Sigmoid colon (tissue), 7 donors: ENCODE measurements at regions of chr20 and their contacts with region 1.

Region 1: DNA sequence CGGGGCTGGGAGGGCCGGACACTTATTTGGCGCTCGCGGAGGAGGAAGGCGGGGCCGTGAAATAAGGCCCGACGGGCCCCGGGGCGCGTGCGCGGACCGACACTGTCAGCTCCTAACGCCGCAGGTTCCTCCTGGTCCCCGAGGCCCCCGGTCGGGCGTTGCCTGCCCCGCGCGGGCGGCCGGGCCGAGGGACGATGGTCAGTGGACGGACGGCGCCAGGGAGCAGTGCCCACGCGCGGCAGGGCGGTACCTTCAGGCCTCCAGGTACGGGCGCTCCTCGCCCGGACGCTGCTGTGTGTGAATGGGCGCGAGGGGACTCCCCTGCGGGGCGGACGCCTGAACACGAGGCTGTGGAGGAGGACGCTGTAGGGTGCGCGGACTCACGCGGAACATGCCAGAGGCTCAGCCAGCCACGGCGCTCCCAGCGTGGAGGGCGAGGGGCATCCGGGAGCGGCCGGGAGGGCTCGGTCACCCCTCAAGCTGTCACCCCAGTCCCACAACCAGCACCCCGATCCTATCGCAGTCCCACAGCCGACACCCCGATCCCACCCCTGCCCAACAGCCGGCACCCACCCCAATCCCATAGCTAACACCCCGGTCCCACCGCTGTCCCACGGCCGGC is 339 bp upstream of the GMEB2 start:
- DNase-seq: peak; percentile 98
- H3K4me3 ChIP-seq: peak overlapping the region; percentile 79 to 98 (median 90)
- H3K27ac ChIP-seq: peak overlapping the region; percentile 95 to 99 (median 96)
- H3K4me1 ChIP-seq: peaks cover 0 to 37% (median 21%) of the 10 kb centered on the region in 4 donors
- H3K27me3 ChIP-seq: no peaks in the 10 kb centered on the region
- CTCF ChIP-seq: no peak
- EP300 ChIP-seq: peak in 1 of 4 donors; percentile 5
- POLR2A ChIP-seq: peak; percentile 36 to 56

Region 2: DNA sequence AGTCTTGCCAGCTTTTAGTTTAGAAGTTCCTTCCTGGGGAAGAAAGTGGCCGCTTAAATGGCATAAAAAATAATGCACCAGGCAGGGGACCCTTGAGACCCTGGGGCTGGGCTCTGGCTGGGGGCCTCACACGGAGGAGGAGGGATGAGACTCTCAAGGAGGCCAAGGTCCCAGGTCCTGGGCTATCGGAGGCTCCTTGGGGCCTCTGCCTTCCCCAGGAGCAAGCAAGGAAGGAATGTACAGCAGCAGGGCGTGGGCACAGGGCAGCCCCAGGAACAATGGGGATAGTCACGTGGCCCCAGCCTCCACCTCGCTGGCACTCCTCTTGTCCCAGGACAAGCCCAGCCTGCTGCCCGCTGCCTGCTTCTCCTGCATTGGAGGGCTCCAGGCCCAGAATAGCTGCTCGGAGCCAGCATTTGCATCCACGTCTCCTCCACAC is 531.1 kb before region 1 on chr20:
- intact Hi-C with region 1: no loop called
- DNase-seq: peak; percentile 55
- H3K4me3 ChIP-seq: no peak overlapping the region
- H3K27ac ChIP-seq: no peak overlapping the region
- H3K4me1 ChIP-seq: no peaks in the 10 kb centered on the region
- H3K27me3 ChIP-seq: peaks cover 0 to 86% (median 39%) of the 10 kb centered on the region in 3 donors
- CTCF ChIP-seq: no peak
- EP300 ChIP-seq: no peak
- POLR2A ChIP-seq: no peak

Region 3: DNA sequence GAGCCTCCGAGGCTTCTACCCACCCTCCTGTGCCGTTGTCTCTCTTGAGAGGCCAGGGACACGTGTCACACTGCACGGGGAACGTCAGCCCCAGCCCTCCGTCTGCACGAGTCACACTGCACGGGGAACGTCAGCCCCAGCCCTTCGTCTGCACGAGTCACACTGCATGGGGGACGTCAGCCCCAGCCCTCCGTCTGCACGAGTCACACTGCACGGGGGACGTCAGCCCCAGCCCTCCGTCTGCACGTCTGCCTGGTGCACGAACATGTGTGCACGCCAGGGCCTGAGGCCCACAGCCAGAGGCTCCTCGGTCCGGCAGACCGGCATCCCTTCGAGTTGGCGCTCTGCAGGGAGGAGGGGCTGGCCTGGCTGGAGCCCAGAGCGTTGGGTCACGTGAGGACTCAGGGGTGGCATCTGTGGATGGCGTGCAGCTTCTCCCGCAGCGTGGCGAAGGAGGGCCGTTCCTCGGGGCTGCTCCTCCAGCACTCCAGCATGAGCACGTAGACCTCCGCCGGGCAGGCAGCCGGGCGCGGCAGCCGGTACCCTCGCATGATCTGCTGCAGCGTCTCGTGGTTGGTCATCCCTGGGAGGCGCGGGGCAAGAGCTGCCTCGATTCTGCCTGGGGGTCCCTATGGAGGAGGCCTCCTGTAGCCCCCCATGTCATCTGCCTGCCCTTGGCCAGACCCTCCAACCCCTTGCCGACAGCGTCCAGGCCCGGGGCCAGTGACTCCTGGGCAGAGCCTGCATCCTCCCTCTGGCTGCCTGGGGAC is 86.6 kb before region 1 on chr20:
- intact Hi-C with region 1: no loop called
- DNase-seq: no peak
- H3K4me3 ChIP-seq: no peak overlapping the region
- H3K27ac ChIP-seq: no peak overlapping the region
- H3K4me1 ChIP-seq: peaks cover 0 to 11% (median 9%) of the 10 kb centered on the region in 4 donors
- H3K27me3 ChIP-seq: peaks cover 2 to 30% (median 15%) of the 10 kb centered on the region in 3 donors
- CTCF ChIP-seq: no peak
- EP300 ChIP-seq: no peak
- POLR2A ChIP-seq: no peak

Region 4: GRCh38 chr20:63574156-63574828 is 52.9 kb before region 1 on chr20 and contains the start of gene HELZ2:
- intact Hi-C with region 1: loop called (anchors 2 kb)
- DNase-seq: peak; percentile 90
- H3K4me3 ChIP-seq: peak within 1 kb of the TSS; percentile 88 to 97 (median 92)
- H3K27ac ChIP-seq: peak within 1 kb of the TSS; percentile 78 to 87 (median 81)
- H3K4me1 ChIP-seq: peaks cover 0 to 29% (median 27%) of the 10 kb centered on the region in 4 donors
- H3K27me3 ChIP-seq: no peaks in the 10 kb centered on the region
- CTCF ChIP-seq: no peak
- EP300 ChIP-seq: no peak
- POLR2A ChIP-seq: no peak
- total RNA-seq, gene HELZ2: 9.5 to 48.1 (median 15.4) TPM

Region 5: DNA sequence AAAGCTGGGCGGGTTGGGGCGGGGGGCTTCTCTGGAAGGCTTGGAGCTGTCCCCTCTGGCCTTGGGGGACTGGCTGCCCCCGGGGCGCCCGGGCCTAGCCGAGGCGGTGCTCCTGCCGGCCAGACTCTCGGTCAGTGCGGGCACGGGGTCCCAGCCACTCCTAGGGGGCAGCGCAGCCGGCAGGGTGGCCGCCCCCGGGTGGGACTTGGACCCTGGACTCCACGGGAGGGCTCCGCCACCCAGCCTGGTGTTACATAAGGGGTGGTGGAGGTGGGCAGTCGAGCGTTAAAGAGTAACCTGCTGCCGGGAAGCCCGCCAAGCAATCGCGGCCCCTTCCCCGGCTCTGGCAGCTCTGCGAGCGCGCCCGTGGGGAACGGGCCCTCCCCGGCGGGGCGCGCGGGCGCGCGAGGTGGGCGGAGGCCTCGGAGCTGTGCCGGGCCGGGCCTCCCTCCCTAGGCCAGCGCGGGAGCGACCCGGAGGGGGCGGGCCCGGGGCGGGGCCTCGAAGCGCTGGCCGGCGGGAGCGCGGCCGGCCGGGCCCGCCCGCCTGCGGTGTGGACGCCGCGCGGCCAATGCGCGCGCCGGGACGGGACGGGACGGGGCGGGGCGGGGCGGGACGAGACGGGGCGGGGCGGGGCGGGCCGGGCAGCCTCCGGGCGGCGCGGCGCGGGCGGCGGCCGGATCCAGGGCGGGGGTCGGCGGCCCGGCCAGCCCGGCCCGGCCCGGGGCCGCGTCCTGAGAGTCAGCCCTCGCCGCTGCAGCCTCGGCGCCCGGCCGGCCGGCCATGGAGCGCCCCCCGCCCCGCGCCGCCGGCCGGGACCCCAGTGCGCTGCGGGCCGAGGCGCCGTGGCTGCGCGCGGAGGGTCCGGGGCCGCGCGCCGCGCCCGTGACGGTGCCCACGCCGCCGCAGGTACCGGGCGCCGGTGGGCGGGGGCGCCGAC is 112.2 kb after region 1 on chr20 and contains the start of gene SLC2A4RG:
- intact Hi-C with region 1: loop called (anchors 2 kb)
- DNase-seq: peak; percentile 89
- H3K4me3 ChIP-seq: peak within 1 kb of the TSS; percentile 65 to 71 (median 66)
- H3K27ac ChIP-seq: peak within 1 kb of the TSS; percentile 91 to 96 (median 96)
- H3K4me1 ChIP-seq: peaks cover 0 to 43% (median 36%) of the 10 kb centered on the region in 4 donors
- H3K27me3 ChIP-seq: peaks cover 0 to 10% (median 0%) of the 10 kb centered on the region in 3 donors
- CTCF ChIP-seq: no peak
- EP300 ChIP-seq: no peak
- POLR2A ChIP-seq: no peak
- total RNA-seq, gene SLC2A4RG: 25.2 to 78.2 (median 54.5) TPM